Testis (tissue), 5 donors: ENCODE measurements at regions of chr3 and their contacts with region 1.

Region 1: GRCh38 chr3:5980475-5980874 is 793.0 kb downstream of the EDEM1 start:
- DNase-seq: no peak
- H3K4me3 ChIP-seq: no peak overlapping the region
- H3K27ac ChIP-seq: no peak overlapping the region
- H3K4me1 ChIP-seq: no peaks in the 10 kb centered on the region
- H3K27me3 ChIP-seq: no peaks in the 10 kb centered on the region
- CTCF ChIP-seq: no peak
- POLR2A ChIP-seq: no peak

Region 2: DNA sequence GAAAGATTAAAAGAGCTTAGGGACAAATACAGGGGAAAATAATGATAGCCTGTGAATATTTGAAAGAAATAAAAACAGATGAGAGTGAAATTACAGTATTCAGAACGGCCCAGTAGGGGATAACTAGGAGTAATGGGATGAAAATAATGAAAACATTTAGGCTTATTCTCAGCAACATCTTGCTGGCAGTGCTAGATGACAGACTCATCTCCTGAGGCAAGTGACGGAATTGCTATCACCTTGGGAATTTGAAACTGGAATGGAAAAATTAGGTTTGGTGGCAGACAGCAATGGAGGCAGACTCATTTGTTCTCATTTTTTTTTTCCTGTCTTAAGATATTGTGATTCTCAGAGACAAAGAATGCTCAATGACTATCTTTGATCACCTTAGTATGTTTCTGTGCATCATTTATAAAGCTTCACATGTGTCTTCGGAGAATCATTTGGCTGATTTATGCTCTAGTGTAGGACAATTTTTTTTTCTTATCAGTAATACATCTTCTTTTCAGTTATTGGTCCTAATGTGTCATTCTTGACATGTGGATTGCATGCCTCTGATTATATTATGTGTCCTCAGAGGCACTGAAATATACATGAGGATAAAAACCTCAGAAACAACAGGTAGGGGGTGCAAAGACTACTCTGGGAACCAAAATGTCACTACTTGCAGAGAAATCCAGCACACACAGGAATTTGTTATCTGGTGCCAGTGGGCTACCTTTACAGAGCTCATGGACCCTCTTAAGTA is 81.3 kb before region 1 on chr3:
- intact Hi-C with region 1: loop called (anchors 2 kb)
- DNase-seq: no peak
- H3K4me3 ChIP-seq: no peak overlapping the region
- H3K27ac ChIP-seq: no peak overlapping the region
- H3K4me1 ChIP-seq: no peaks in the 10 kb centered on the region
- H3K27me3 ChIP-seq: no peaks in the 10 kb centered on the region
- CTCF ChIP-seq: no peak
- POLR2A ChIP-seq: no peak